Panc1 (cell line): ENCODE measurements at regions of chr12 and their contacts with region 1.

Region 1: DNA sequence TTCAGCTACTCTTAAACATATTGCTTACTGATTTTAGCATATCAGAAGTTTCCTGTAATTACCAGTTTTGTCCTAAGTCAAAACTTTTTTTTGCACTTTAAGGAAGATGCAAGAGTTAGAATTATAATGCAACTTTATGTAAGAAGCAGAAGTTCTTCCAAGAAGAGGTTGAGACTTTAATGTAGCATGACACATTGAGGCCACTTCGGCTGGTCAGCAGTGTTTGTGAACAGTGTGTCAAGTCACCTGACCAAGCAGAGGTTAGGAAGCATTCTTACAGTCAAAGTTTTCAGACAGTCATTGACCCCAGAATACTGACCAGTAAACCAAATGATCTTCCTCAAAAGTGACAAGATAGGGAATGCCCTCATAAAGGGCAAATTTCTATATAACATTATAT is 15.2 kb downstream of the FGFR1OP2 start:
- DNase-seq: no peak
- ATAC-seq: no peak
- H3K4me3 ChIP-seq: no peak overlapping the region
- H3K27ac ChIP-seq: no peak overlapping the region
- H3K4me1 ChIP-seq: no peaks in the 10 kb centered on the region
- H3K27me3 ChIP-seq: no peaks in the 10 kb centered on the region
- CTCF ChIP-seq: no peak

Region 2: DNA sequence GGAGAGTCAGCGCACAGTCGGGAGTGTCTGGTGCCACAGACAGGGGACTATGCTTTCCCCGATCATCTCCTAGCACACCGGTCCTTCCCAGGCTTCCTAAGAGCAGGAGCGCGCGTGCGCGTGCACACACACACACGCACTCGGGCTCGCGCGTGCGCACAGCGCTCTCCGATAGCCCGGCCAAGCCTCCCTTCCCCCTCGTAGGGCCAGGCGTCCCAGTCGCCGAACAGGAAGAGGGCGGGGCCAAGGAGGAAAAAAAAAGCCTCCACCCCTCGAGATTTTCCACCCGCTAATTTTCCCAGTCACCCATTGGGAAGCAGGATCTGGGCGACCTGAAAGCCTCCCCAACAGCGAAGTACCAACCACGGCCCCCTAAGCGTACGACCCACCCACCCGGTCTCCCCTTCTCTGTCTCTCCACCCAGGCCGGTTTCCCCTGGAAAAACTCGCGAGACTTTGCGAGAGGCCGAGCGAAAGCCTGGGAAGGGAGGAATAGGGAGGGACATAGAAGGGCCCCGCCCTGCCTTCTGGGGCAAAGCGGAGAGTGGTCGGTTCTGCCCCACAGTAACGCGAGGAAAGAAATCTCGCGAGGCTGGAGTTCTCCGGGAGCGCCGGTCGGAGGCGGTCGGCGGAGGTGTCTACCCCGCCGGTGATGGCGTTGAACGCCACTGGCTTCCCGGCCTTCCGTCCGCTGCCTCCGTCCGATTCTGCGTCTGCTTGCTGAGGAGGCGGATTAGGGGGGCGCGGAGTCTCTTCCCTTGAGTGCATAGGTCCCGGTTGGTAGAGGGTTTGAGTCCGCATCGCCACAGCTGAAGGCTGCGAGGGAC is 15.4 kb before region 1 on chr12 and contains the starts of genes FGFR1OP2 and INTS13:
- CTCF ChIA-PET with region 1: no interaction called
- POLR2A ChIA-PET with region 1: interaction called, 14 read pairs
- in situ Hi-C with region 1: no loop called
- intact Hi-C with region 1: no loop called
- DNase-seq: peak; percentile 98
- ATAC-seq: peak; percentile 98
- H3K4me3 ChIP-seq: peak within 1 kb of the TSS; percentile 98
- H3K27ac ChIP-seq: peak within 1 kb of the TSS; percentile 98
- H3K4me1 ChIP-seq: peaks cover 40% of the 10 kb centered on the region
- H3K27me3 ChIP-seq: no peaks in the 10 kb centered on the region
- CTCF ChIP-seq: no peak
- total RNA-seq, gene FGFR1OP2: 60.1 TPM
- total RNA-seq, gene INTS13: 55.9 TPM